ENCODE measurements at regions of chr6 and their contacts with region 1.

Region 1: GRCh38 chr6:36716476-36717093 is 19.0 kb downstream of the RAB44 start:
- DNase-seq: no peak
- ATAC-seq: no peak
- H3K4me3 ChIP-seq: no peak overlapping the region
- H3K27ac ChIP-seq: no peak overlapping the region
- H3K4me1 ChIP-seq: no peaks in the 10 kb centered on the region
- H3K27me3 ChIP-seq: no peaks in the 10 kb centered on the region
- CTCF ChIP-seq: no peak

Region 2: GRCh38 chr6:36504982-36505381 is 211.6 kb before region 1 on chr6:
- CTCF ChIA-PET with region 1: no interaction called
- POLR2A ChIA-PET with region 1: no interaction called
- in situ Hi-C with region 1: no loop called
- intact Hi-C with region 1: no loop called
- DNase-seq: no peak
- ATAC-seq: no peak
- H3K4me3 ChIP-seq: no peak overlapping the region
- H3K27ac ChIP-seq: no peak overlapping the region
- H3K4me1 ChIP-seq: no peaks in the 10 kb centered on the region
- H3K27me3 ChIP-seq: no peaks in the 10 kb centered on the region
- CTCF ChIP-seq: no peak

Region 3: DNA sequence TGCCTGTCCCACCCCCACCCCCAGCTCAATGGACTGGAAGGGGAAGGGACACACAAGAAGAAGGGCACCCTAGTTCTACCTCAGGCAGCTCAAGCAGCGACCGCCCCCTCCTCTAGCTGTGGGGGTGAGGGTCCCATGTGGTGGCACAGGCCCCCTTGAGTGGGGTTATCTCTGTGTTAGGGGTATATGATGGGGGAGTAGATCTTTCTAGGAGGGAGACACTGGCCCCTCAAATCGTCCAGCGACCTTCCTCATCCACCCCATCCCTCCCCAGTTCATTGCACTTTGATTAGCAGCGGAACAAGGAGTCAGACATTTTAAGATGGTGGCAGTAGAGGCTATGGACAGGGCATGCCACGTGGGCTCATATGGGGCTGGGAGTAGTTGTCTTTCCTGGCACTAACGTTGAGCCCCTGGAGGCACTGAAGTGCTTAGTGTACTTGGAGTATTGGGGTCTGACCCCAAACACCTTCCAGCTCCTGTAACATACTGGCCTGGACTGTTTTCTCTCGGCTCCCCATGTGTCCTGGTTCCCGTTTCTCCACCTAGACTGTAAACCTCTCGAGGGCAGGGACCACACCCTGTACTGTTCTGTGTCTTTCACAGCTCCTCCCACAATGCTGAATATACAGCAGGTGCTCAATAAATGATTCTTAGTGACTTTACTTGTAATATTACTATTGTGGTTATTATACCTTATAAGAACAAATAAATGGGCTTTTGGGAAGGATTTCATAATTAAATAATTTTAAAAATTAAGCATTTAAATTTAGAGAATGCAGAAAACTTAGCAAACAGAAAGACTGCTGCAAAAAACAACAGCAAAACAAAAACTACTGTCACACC is 29.7 kb before region 1 on chr6:
- CTCF ChIA-PET with region 1: interaction called, 19 read pairs
- POLR2A ChIA-PET with region 1: no interaction called
- in situ Hi-C with region 1: no loop called
- intact Hi-C with region 1: no loop called
- DNase-seq: no peak
- ATAC-seq: no peak
- H3K4me3 ChIP-seq: no peak overlapping the region
- H3K27ac ChIP-seq: no peak overlapping the region
- H3K4me1 ChIP-seq: peaks cover 23% of the 10 kb centered on the region
- H3K27me3 ChIP-seq: no peaks in the 10 kb centered on the region
- CTCF ChIP-seq: no peak